Endothelial cell of umbilical vein (primary cell): ENCODE measurements at regions of chr11 and their contacts with region 1.

Region 1: GRCh38 chr11:74870485-74870884 is 78.4 kb downstream of the XRRA1 start:
- DNase-seq: peak; percentile 49
- H3K4me3 ChIP-seq: no peak overlapping the region
- H3K27ac ChIP-seq: no peak overlapping the region
- H3K4me1 ChIP-seq: no peaks in the 10 kb centered on the region
- H3K27me3 ChIP-seq: no peaks in the 10 kb centered on the region
- CTCF ChIP-seq: peak; percentile 39 to 45
- POLR2A ChIP-seq: no peak

Region 2: GRCh38 chr11:74473382-74474173 is 396.9 kb before region 1 on chr11:
- CTCF ChIA-PET with region 1: no interaction called
- POLR2A ChIA-PET with region 1: no interaction called
- dilution Hi-C with region 1: loop called (anchors 10 kb)
- intact Hi-C with region 1: no loop called
- DNase-seq: no peak
- H3K4me3 ChIP-seq: no peak overlapping the region
- H3K27ac ChIP-seq: no peak overlapping the region
- H3K4me1 ChIP-seq: peaks cover 3% of the 10 kb centered on the region
- H3K27me3 ChIP-seq: peaks cover 0 to 6% of the 10 kb centered on the region in 2 experiments
- CTCF ChIP-seq: no peak
- POLR2A ChIP-seq: no peak

Region 3: DNA sequence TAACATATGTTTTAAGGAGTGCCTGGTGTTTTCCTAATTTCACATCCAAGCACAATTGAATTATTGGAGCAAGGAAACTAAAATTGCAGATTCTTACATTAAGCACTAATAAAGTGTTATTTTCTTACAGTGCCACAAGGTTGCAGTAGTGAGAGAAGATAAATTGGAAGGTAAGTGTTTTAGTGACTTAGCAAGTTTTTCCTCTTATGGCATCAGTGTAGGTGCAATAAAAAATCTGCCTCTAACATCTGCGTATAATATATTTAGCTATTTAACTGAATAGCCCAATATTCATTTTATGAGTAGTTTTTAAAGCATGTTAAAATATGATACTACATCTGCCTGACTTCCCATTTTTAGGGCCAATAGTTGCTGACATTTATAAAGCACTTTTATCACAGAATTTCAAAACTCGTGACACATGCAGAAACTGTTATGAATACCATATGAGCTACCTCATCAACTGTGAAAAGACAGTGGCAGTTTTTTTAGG is 259.1 kb before region 1 on chr11:
- CTCF ChIA-PET with region 1: no interaction called
- POLR2A ChIA-PET with region 1: no interaction called
- dilution Hi-C with region 1: no loop called
- intact Hi-C with region 1: loop called (anchors 1 kb)
- DNase-seq: peak; percentile 46
- H3K4me3 ChIP-seq: no peak overlapping the region
- H3K27ac ChIP-seq: no peak overlapping the region
- H3K4me1 ChIP-seq: no peaks in the 10 kb centered on the region
- H3K27me3 ChIP-seq: no peaks in the 10 kb centered on the region
- CTCF ChIP-seq: peak in 1 of 2 donors; percentile 26
- POLR2A ChIP-seq: no peak